Posterior cingulate gyrus (tissue), 11 donors: ENCODE measurements at regions of chr2 and their contacts with region 1.

Region 1: GRCh38 chr2:230824406-230824978 is 40.2 kb upstream of the ITM2C start:
- DNase-seq: peak in 7 of 10 donors; percentile 30 to 89 (median 43)

Region 2: DNA sequence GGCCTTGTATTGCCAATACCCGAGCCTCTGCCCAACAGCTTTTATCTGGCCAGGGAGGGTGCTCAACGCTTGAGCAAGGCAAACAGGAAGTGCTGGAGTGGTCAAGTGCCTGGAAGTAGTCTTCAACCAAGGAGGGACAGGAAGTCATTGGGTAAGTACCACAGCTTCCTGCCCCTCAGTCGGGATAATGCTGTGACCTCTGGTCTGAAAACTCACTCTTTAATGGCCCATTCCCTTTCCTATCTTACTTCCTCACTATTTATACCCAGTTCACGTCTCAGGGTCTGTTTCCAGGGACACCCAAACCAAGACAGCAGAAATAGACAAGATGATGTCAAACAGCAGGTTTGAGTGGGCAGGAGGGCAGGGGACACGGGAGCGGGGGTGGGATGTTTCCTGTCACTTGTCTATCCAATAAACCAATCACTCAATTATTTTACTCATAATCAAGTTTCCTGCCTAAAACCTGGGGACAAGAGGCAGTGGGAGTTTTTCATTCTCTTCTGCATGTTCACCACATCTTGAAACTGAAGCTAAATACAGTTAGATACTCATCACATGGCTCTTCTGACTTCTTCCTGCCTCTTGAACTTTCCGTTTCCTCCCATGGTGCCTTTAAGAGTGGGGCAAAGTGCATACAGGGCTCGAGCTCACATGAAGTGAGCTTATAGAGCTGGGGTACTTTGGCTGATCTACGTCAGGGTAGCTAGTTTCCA is 180.8 kb before region 1 on chr2:
- intact Hi-C with region 1: no loop called
- DNase-seq: peak in 2 of 10 donors; percentile 7 to 41

Region 3: GRCh38 chr2:230987137-230988020 is 162.9 kb after region 1 on chr2:
- intact Hi-C with region 1: loop called (anchors 1 kb)
- DNase-seq: peak; percentile 64 to 97 (median 86)

Region 4: DNA sequence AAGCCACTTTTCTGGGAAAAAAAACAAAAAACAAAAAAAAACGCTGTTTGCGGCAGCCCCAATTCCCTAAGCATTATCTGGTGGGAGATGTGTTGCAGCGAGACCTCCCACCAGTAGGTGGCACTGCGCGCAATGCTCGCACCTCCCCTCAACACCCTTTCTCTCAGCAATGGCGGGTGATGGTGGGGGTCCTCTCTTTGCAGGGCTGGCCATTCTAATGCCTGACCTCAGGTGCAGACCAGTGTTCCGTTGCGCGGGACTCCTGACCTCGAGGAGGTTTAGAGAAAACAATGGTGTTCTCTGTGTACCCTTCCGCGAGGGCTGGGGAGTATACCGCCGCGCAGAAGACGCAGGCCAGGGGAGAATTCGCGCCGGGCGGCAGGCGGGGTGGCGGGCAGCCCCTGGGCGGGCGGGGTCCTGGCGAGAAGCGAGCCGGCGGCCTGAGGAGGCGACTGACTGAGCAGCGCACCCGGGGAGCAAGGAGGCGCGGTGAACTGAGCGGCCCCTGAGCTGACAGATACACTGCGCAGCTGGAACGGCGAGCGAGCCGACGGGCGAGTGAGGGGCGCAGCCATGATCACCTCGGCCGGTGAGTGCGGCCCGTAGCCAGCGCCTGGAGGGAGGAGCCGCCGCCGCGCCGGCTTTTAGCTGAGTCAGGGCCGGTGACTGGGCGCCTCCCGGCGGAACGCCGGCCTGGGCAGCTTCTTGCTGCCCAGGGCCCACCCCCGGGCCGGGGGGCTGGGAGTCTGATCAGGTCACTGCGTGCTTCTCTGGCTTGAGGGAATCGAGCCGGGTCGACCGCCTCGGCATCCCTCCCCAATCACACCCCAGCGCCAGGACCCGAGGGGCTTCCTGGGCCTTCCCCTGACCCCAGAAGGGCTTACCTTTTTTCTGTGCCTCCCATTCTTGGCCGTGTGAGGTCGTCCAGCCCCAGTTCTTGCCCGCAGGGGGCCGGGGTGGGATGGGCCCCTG is 232.2 kb after region 1 on chr2 and contains the start of gene PSMD1:
- intact Hi-C with region 1: loop called (anchors 10 kb)
- DNase-seq: peak; percentile 85 to 98 (median 91)